Ascending aorta (tissue), 2 donors: ENCODE measurements at regions of chr16 and their contacts with region 1.

Region 1: GRCh38 chr16:69861292-69862030 is 89.7 kb upstream of the CLEC18A start:
- DNase-seq: peak in 1 of 2 donors; percentile 86
- H3K4me3 ChIP-seq: peak overlapping the region; percentile 29 to 31
- H3K27ac ChIP-seq: peak overlapping the region; percentile 86 to 94
- H3K4me1 ChIP-seq: peaks cover 13 to 30% of the 10 kb centered on the region in 2 donors
- H3K27me3 ChIP-seq: no peaks in the 10 kb centered on the region
- CTCF ChIP-seq: no peak

Region 2: GRCh38 chr16:69796351-69797118 is 64.9 kb before region 1 on chr16:
- intact Hi-C with region 1: loop called (anchors 5 kb)
- DNase-seq: no peak
- H3K4me3 ChIP-seq: peak overlapping the region in 1 of 2 donors; percentile 46
- H3K27ac ChIP-seq: peak overlapping the region in 1 of 2 donors; percentile 17
- H3K4me1 ChIP-seq: peaks cover 0 to 5% of the 10 kb centered on the region in 2 donors
- H3K27me3 ChIP-seq: no peaks in the 10 kb centered on the region
- CTCF ChIP-seq: peak; percentile 82 to 89 (median 89)

Region 3: DNA sequence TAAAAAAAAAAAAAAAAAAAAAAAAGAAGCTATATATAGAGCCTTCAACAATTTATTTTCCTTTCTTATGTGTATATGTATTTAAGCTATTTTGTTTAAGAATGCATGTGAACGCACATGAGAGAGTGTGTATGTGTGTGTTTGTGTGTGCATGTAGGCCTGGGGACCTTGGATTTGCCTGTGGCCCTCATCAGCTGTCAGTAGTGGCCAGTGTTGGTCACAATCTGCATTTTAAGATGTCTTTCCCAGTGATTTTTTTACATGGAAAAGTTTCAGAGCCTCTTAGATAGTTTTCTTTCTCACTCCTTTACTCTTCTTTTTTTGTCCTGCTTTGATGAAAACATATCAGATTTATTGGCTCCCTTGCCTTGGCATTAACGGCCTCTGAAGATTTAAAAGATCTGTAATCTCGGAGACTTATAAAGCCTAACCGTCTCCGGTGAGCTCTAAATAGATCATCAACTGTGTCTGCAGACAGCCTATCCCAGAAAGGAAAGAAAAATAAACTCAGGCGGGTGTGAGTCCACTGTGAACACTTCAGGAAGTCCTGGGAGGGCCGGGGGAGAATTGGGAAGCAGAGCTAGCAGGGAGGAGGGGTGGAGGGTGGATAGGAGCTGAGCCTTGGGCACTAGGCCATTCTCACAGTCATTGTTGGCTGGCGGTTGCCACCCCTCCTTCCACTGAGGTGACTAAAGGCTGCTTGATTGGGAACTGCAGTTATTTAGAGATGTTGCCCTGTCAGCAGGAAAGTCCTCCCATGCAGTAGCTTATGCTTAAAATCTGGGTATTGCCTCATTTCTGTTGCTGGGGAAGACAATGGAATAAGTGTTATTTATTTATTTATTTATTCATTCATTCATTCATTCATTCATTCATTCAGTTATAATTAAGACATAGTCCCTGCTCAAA is 12.6 kb before region 1 on chr16:
- intact Hi-C with region 1: loop called (anchors 1 kb)
- DNase-seq: peak; percentile 82 to 97
- H3K4me3 ChIP-seq: peak overlapping the region; percentile 20 to 29
- H3K27ac ChIP-seq: peak overlapping the region; percentile 78 to 82
- H3K4me1 ChIP-seq: peaks cover 6 to 20% of the 10 kb centered on the region in 2 donors
- H3K27me3 ChIP-seq: no peaks in the 10 kb centered on the region
- CTCF ChIP-seq: peak in 1 of 3 experiments; percentile 26

Region 4: DNA sequence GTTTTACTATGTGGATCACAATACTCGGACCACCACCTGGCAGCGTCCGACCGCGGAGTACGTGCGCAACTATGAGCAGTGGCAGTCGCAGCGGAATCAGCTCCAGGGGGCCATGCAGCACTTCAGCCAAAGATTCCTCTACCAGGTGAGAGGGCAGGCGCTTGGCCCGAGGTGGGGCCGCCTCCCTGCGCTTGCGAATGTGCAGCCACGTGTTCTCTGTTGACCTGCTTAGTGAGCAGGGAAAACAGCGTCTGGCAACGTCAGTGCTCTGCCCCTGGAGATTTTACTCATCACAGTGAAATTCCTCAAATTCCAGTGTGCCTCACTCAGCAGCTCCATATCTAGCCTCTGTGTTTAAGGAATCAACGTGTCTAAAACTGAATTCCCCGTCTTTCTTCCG is 56.3 kb after region 1 on chr16:
- intact Hi-C with region 1: loop called (anchors 2 kb)
- DNase-seq: peak in 1 of 2 donors; percentile 91
- H3K4me3 ChIP-seq: peak overlapping the region; percentile 37 to 52
- H3K27ac ChIP-seq: peak overlapping the region; percentile 96 to 97
- H3K4me1 ChIP-seq: peaks cover 20 to 56% of the 10 kb centered on the region in 2 donors
- H3K27me3 ChIP-seq: no peaks in the 10 kb centered on the region
- CTCF ChIP-seq: no peak

Region 5: GRCh38 chr16:69924777-69925191 is 63.3 kb after region 1 on chr16:
- intact Hi-C with region 1: loop called (anchors 1 kb)
- DNase-seq: peak; percentile 46 to 93
- H3K4me3 ChIP-seq: peak overlapping the region; percentile 53 to 72
- H3K27ac ChIP-seq: peak overlapping the region; percentile 96 to 97
- H3K4me1 ChIP-seq: peaks cover 18 to 57% of the 10 kb centered on the region in 2 donors
- H3K27me3 ChIP-seq: no peaks in the 10 kb centered on the region
- CTCF ChIP-seq: no peak